ENCODE measurements at regions of chr10 and their contacts with region 1.

Region 1: DNA sequence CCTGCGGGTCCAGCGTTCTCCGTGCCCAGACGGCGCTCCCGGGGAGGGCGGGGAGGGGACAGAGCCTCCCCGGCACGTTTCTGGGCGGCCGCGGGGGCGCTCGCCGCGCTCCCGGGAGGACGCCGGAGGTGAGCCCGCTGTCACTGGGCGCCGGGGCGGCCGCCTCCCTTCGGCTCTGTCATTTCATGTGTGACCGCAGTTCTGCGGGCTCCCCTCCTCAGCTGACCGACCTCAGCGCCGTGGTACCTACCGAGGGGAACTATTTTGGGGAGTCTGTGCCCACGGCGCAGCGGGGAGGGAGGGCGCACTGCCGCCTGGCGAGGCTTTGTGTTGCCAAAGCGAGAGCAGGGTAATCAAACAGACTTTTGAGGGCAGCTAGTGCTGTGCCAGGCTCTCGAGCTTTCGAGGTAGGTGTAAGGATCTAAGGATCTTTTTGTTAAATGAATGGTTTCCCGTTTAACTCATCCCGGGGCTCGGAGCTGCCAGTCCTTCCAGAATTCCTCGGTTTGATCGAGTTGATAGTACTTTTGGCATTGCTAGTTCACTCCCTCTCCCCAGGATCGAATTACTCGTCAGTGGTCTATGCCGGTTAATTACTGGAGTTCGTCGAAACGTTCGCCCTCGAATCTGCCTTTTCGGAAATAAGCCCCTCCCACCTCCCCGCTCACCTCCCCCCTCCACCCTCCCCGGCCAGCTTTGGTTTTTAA is 1.9 kb downstream of the ARID5B start:
- DNase-seq: peak; percentile 49

Region 2: DNA sequence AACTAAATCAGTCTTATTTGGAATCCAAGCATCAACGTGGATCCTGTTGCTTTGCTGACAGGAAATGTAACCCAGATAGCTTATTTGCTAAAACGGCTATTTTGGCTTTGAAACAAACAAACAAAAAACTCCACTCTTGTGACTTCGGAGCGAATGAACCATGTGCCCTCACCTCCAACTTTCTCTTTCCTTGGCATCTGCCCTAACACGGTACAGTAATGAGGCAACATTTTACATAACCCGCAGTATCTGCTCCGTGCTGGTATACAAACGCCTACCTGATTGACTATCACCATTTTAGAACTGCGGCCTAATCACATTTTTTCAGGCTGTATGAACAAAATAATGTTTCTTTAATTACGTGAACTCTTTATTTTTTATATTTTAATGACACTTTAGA is 39.4 kb before region 1 on chr10:
- CTCF ChIA-PET with region 1: interaction called, 10 read pairs
- POLR2A ChIA-PET with region 1: no interaction called
- DNase-seq: no peak

Region 3: GRCh38 chr10:62038609-62039190 is 135.3 kb after region 1 on chr10:
- CTCF ChIA-PET with region 1: interaction called, 18 read pairs
- POLR2A ChIA-PET with region 1: interaction called, 3 read pairs
- DNase-seq: peak; percentile 61

Region 4: GRCh38 chr10:62050893-62051433 is 147.6 kb after region 1 on chr10:
- CTCF ChIA-PET with region 1: interaction called, 7 read pairs
- POLR2A ChIA-PET with region 1: interaction called, 10 read pairs
- DNase-seq: no peak

Measured in HEK293T (cell line).